Common myeloid progenitor, CD34-positive (primary cell): ENCODE measurements at regions of chr5 and their contacts with region 1.

Region 1: DNA sequence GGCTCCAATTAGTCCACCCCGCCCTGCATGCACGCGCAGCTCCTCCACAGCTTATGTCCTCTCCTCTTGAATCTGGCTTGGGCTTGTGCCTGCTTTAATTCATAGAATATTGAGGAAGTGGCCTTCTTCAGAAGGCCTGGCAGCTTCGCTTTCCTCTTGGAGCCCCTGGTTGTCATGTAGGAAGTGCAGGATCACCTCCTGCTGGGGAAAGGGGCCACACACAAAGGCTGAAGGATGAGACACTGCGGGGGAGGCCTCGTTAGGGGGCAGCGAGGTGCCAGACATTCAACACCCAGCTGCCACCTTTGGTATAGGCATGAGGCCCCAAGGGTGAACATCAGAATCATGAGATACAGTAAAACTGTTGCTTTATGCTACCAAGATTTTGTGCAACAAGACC is 2.7 kb upstream of the CNOT6 start:
- DNase-seq: peak in 2 of 3 donors; percentile 40 to 41
- H3K4me3 ChIP-seq: no peak overlapping the region
- H3K27ac ChIP-seq: no peak overlapping the region
- H3K4me1 ChIP-seq: peaks cover 7 to 24% (median 15%) of the 10 kb centered on the region in 4 experiments
- H3K27me3 ChIP-seq: no peaks in the 10 kb centered on the region

Region 2: GRCh38 chr5:180222056-180222455 is 269.4 kb before region 1 on chr5:
- CTCF ChIA-PET with region 1: no interaction called
- POLR2A ChIA-PET with region 1: no interaction called
- DNase-seq: no peak
- H3K4me3 ChIP-seq: no peak overlapping the region
- H3K27ac ChIP-seq: no peak overlapping the region
- H3K4me1 ChIP-seq: no peaks in the 10 kb centered on the region
- H3K27me3 ChIP-seq: no peaks in the 10 kb centered on the region

Region 3: DNA sequence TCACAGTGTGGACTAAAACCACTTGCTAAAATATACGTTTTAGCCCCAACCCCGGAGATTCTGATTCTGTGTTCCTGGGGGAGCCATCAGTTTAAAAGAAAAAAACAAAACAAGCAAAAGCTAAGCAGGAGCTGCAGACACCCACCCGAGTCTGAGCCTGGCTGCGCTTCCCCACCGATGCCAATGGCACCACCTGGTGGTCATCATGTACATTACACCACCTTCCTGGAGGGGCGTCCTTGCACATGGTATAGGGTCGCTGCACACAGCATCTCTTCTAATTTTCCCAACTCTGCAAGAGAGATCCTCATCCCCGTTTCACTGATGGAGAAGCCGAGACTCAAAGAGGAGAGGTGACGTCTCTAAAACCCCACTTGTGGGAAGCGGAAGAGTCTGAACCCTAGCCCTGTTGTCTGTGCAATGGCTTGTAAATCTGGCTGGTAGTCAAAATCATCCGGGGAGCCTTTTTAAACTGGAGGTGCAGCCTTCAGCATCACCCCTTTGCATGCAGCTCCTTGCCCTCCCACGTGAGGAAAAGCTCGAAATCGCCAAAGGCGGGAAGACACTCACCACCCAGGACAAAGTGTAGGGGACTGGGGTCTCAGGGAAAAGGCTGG is 20.4 kb before region 1 on chr5:
- CTCF ChIA-PET with region 1: interaction called, 12 read pairs
- POLR2A ChIA-PET with region 1: no interaction called
- DNase-seq: peak; percentile 61 to 79 (median 73)
- H3K4me3 ChIP-seq: no peak overlapping the region
- H3K27ac ChIP-seq: no peak overlapping the region
- H3K4me1 ChIP-seq: no peaks in the 10 kb centered on the region
- H3K27me3 ChIP-seq: peaks cover 0 to 7% (median 6%) of the 10 kb centered on the region in 5 experiments